AG04449 (cell line): ENCODE measurements at regions of chr12 and their contacts with region 1.

Region 1: DNA sequence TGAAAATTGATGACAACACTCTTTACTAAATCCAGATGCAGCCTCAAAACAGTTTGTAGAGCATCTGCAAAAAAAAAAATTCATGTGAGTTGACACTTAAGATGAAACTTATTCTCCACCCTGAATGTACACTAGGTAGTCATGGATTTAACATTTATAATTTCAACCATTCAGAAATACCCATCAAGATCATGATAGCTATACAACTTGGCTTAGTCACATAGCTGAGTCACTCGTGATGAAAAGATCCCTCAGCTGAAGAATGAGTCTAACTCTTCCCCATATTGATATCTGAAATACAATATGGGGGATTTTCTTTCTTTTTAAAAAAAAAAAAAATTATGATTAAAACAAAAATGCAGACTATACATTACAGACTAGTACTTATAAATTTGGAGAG is 104.8 kb upstream of the PLEKHG7 start:
- DNase-seq: no peak
- H3K4me3 ChIP-seq: no peak overlapping the region
- CTCF ChIP-seq: no peak

Region 2: DNA sequence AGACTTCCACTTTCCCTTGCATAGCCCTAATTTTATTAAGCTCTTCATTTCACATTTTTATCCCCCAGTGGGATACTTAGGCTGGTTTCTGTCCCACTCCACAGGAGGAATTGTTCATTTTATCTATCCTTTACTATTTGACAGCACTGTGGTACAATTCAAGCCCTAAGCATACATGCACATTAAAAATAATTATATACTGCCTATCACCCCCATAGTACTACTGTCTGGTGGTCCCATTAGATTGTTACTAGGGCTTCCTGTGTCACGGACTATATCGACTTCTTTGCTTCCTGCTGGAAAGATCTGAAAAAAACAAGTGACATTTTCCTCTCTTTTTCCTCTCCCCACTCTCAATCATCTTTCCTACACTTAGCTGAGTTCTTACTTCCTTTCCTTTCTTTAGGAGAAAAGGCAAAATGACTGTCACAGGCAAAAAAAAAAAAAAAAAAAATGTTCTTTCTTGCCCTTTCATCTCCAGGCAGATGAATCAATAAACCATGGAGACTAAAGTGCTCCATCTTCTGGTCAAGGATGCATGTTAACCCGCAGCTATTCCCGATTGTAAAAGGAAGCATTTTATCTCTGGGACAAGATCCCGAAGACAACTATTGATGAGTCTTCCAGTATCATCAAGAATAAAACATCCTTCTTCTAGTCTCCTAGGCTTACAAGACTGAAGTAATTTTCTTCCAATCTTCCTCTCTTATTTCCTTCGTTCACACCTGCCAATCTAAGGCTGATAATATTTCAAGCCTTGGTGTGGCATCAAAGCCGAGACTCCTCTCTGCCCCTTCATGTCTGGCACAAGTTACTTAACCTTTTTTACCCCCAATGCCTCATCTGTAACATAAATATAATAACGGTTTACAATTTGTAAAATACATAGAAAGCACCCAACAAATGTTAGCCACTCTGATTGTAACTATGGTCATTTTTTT is 10.4 kb after region 1 on chr12:
- CTCF ChIA-PET with region 1: interaction called, 24 read pairs
- POLR2A ChIA-PET with region 1: interaction called, 3 read pairs
- DNase-seq: no peak
- H3K4me3 ChIP-seq: no peak overlapping the region
- CTCF ChIP-seq: peak; percentile 51

Region 3: DNA sequence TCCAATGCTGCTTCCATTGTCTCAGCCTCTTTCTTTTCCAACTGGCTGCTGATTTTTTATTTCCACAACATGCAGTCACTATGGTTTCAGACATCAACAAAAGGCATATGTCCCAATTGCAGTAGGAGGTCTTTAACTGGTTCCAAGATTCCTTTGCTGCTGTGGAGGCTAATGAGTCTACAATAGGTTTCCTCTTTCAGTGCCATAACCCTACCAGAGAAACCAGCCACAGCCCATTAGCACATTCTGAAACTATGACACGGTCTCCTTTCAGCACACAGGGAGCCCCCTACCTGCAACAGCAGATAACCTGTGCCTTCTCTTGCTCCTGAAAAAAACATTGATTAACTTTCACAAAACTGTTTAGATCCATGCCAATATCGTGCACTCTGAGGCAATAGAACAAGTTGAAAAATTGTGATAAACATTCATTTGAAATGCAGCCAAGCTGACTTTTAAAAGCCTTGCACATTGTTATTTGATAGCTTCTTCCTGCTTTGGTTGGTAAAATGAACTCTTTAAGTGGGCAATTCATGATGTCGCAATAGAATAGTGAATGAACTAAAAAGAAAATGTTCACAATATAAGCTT is 137.2 kb after region 1 on chr12:
- CTCF ChIA-PET with region 1: no interaction called
- POLR2A ChIA-PET with region 1: no interaction called
- DNase-seq: peak; percentile 78
- H3K4me3 ChIP-seq: no peak overlapping the region
- CTCF ChIP-seq: no peak